Gastrocnemius medialis (tissue), 4 donors: ENCODE measurements at regions of chrX and their contacts with region 1.

Region 1: DNA sequence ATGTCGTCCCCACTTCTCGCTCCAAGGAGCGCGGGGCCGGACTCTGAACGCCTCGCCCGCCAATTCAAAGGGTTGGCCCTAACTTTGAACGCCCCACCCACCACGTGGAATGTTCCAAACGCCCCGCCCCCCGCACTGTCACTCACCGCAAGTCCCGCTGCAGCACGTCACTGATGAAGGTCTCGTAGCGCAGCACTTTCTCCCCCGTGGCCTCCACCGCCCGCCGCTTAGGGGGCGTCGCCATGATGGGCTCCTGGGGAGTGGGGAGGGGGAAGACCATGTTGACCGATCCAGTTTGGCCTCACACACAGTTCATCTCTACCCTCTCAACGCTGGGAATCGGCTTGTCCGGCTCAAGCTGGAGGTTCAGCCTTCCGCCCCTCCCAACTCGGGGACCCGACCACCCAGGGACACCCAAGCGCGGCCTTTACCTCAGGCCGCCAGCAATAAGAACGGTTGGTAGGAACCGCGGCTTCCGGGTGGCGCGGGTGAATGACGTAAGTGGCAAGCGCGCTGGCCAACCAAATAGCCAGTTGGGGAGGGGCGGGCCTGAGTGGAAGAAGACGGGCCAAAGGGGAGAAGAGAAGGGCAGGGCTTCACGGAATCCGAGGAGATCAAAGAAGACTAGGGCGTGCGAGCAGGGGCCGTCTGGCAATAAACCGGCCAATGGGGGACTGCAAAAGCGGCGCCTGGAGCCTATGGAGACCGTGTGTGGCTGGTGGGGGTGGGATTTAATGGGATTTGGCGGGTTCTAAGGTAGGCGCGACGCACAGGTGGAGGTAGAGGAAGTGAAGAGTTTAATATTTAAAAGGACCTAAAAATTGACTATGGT is at the start of gene UXT:
- DNase-seq: peak; percentile 79 to 89
- ATAC-seq: peak; percentile 95 to 96
- H3K4me3 ChIP-seq: peak within 1 kb of the TSS; percentile 57 to 81 (median 70)
- H3K27ac ChIP-seq: peak within 1 kb of the TSS; percentile 88 to 96 (median 92)
- H3K4me1 ChIP-seq: no peaks in the 10 kb centered on the region
- H3K27me3 ChIP-seq: no peaks in the 10 kb centered on the region
- CTCF ChIP-seq: no peak
- POLR2A ChIP-seq: peak; percentile 66 to 68
- total RNA-seq, gene UXT: 92.3 to 153 (median 109) TPM

Region 2: DNA sequence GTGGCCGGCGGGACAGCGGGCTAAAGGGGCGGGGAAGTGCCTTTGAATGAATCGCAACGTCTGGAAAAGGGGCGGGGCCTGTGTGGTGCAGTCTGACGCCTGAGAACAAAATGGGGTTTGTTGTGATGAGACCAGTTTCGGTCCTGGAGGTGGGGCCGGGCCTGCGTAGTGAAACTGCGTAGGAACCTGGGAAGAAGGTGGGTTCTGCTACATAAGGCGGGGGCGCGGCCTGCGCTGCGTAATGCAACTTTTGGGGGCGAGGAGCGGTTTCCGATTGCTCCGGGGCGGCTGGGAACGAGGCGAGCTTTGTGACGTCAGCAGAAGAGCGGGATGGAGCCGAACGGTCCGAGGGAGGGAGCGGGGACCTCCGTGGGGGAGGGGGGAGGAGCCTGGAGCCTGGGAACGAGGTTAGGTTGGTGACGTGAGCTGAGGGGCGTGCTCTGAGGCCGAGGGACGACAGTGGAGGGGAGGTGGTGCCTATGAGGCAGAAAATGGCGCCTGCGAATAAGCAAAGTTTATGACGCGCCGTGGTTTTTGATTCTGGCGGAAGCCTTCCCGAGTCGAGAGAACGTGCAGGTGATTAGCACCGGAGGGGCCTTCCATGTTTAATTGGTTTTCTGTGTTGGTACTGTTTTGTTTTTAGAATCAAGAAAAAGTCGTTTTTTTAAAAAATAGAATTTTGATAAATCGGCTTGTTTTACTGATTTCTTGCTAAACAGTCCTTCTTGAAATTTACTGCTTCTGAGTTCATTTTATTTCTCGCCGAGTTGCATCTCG is 425.4 kb before region 1 on chrX:
- in situ Hi-C with region 1: no loop called
- intact Hi-C with region 1: loop called (anchors 2 kb)
- DNase-seq: peak; percentile 91 to 94
- ATAC-seq: peak; percentile 92 to 94
- H3K4me3 ChIP-seq: peak overlapping the region; percentile 57 to 84 (median 74)
- H3K27ac ChIP-seq: peak overlapping the region; percentile 88 to 93 (median 91)
- H3K4me1 ChIP-seq: peaks cover 0 to 3% of the 10 kb centered on the region in 2 donors
- H3K27me3 ChIP-seq: no peaks in the 10 kb centered on the region
- CTCF ChIP-seq: no peak
- POLR2A ChIP-seq: peak; percentile 36 to 76

Region 3: DNA sequence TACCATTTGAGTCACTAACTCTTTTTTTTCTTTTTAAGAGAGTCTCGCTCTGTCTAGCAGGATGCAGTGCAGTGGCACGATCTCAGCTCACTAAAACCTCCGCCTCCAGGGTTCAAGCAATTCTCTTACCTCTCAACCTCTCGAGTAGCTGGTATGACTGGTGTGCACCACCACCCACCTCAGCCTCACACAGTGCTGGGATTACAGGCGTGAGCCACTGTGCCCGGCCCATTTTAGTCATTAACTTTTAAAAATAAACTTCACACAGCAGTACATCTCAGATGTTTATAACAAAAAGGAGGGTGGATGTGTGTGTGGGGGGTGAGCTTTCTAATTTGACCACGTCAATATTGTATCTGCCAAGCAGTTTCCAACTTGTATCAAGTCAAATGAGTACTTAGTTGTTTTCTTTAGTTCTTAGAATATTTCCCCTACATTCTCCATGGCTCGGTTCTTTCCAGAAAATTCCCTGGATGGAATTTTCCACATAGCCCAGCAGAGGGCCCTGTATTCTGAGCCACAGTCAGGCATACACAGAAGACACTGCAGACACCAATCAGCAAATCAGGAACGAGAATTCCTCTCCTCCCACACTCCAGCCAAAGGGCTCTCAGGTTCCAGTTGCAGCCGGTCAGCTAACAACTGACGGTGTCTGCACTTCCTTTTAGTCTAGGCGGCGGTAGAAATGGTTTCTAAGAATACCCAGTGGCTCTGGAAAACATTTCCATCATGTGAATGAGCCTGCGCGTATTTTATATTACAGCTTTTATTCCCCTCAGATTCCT is 118.0 kb before region 1 on chrX:
- in situ Hi-C with region 1: no loop called
- intact Hi-C with region 1: loop called (anchors 2 kb)
- DNase-seq: peak; percentile 80 to 87
- ATAC-seq: peak; percentile 100
- H3K4me3 ChIP-seq: peak overlapping the region in 1 of 4 donors; percentile 11
- H3K27ac ChIP-seq: peak overlapping the region; percentile 78 to 85 (median 82)
- H3K4me1 ChIP-seq: peaks cover 10 to 16% of the 10 kb centered on the region in 2 donors
- H3K27me3 ChIP-seq: no peaks in the 10 kb centered on the region
- CTCF ChIP-seq: peak; percentile 41 to 58 (median 52)
- POLR2A ChIP-seq: peak; percentile 27 to 47

Region 4: DNA sequence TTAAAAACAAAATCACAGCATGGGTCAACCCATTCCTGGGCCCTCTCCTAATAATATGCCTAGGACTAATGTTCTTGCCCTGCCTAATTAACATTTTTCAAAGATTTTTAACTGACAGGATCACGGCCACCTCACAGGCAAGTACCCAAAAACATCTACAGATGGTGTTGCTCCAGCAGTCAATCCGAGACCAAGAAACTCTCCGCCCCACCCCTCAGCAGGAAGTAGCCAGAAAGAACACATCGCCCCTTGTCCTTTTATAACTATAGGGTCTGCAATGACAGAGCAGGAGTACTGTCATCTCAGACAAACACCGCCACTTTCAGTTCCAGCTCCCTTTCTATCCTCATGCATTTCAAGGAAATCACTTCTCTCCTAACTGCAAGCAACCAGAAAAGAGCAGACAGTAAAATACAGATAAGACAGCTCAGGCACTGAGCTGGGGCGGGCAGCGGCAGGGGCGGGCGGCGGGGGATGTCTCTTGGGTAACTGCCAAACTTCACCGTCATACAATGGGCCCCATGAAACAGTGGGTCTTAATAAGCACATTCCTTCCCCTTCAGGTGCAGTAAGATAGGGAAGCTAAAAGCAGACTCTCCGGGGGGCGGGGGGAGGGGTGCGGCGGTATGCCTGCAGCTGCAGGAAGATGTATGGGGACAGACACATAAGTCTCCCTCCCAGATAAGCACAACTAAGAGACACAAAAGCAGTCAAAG is 277.5 kb after region 1 on chrX:
- in situ Hi-C with region 1: no loop called
- intact Hi-C with region 1: no loop called
- DNase-seq: no peak
- ATAC-seq: no peak
- H3K4me3 ChIP-seq: no peak overlapping the region
- H3K27ac ChIP-seq: no peak overlapping the region
- H3K4me1 ChIP-seq: no peaks in the 10 kb centered on the region
- H3K27me3 ChIP-seq: no peaks in the 10 kb centered on the region
- CTCF ChIP-seq: no peak
- POLR2A ChIP-seq: no peak

Region 5: DNA sequence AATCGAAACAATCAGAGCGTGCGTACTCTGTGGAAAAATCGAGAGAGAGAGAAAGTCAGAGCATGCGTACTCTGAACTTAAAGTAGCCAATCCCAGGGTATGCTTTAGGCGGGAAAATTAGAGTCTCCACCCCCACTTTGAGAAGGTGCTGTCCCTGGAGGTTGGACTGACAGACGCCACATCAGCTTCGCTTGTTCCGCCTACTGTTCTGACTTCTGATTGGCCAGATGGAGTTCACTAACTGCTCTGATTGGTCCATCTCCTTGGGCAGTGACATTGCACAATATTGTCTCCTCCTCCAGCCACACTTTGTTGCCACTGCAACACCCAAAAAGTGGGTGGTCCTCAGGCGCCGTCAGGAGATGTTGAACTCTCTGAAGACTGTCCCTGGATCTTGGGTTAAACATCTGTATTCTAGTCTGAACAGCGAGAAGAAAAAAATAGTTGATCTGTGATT is 537.9 kb after region 1 on chrX and contains the start of gene SSX5:
- in situ Hi-C with region 1: no loop called
- intact Hi-C with region 1: no loop called
- DNase-seq: no peak
- ATAC-seq: no peak
- H3K4me3 ChIP-seq: no peak within 1 kb of the TSS
- H3K27ac ChIP-seq: no peak within 1 kb of the TSS
- H3K4me1 ChIP-seq: no peaks in the 10 kb centered on the region
- H3K27me3 ChIP-seq: no peaks in the 10 kb centered on the region
- CTCF ChIP-seq: no peak
- POLR2A ChIP-seq: no peak
- total RNA-seq, gene SSX5: not detected